Activated B cell treated with CpG ODN at 0.5 μM for 24 hours (primary cell): ENCODE measurements at regions of chr10 and their contacts with region 1.

Region 1: DNA sequence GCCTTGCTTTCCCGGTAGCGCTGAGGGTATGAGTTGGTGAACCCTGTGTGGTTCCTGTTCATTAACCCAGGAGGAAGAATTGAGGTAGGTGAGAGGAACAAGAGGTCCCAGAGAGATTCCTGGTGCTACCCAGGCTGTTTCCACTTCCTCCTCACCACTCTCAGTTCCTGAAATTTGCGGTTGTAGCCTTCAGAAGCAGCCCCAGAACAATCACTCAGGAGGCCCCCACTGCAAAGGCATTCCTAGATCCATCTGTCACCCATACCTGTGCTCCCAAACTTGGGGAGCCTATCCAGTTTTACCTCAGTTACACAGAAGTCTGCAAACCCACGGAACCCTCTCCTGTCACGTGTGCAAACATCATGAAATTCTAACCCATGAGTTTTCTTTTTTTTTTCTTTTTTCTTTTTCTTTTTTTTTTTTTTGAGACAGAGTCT is 9.0 kb upstream of the PIP4K2A start:
- DNase-seq: peak; percentile 50
- ATAC-seq: peak; percentile 91
- H3K4me3 Mint-ChIP-seq: peak overlapping the region; percentile 80
- H3K27ac Mint-ChIP-seq: peak overlapping the region; percentile 83
- H3K4me1 Mint-ChIP-seq: peaks cover 57% of the 10 kb centered on the region
- H3K27me3 Mint-ChIP-seq: no peaks in the 10 kb centered on the region
- CTCF ChIP-seq: no peak

Region 2: DNA sequence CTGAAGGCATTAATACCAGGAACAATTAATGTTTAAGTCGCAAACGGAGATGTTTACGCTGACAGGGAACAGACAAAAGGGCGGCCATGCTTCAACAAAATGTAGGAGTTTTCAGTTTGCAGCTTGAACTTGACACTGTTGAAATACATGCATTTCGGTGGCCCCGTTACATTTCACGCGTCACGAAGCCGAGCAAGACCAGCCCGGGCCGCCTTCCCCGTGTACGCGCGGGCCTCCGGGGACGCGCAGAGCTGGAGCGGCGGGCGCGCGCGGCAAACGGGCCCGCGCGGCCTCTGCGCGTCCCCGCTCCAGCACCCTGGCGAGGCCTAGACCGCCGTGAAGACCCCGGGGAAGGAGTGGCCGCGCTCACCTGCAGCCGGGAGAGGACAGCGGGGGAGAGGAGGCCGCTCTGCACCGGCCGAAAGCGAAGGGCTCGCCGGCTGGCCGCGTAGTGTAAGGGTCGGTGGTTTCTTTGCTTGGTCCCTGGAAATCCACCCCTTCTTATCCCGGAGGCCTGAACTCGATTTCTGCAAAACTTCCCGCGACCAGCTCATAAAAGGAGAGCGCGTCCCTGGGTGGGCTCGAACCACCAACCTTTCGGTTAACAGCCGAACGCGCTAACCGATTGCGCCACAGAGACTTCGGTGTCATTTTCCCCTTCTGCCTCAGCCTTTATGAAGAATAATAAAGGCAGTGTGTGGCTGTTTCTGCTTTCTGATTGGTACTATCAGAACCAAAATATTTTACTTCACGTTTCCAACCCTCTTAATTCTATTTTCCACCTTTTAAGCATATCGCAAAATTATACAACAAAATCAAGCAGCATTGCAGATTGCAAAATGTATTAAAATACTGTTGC is 494.2 kb before region 1 on chr10:
- CTCF ChIA-PET with region 1: no interaction called
- POLR2A ChIA-PET with region 1: no interaction called
- intact Hi-C with region 1: loop called (anchors 5 kb)
- DNase-seq: peak; percentile 81
- ATAC-seq: peak; percentile 79
- H3K4me3 Mint-ChIP-seq: peak overlapping the region; percentile 88
- H3K27ac Mint-ChIP-seq: peak overlapping the region; percentile 96
- H3K4me1 Mint-ChIP-seq: peaks cover 15% of the 10 kb centered on the region
- H3K27me3 Mint-ChIP-seq: peaks cover 7% of the 10 kb centered on the region
- CTCF ChIP-seq: no peak

Region 3: GRCh38 chr10:22606164-22606614 is 117.2 kb before region 1 on chr10:
- CTCF ChIA-PET with region 1: no interaction called
- POLR2A ChIA-PET with region 1: no interaction called
- intact Hi-C with region 1: loop called (anchors 1 kb)
- DNase-seq: no peak
- ATAC-seq: peak; percentile 75
- H3K4me3 Mint-ChIP-seq: peak overlapping the region; percentile 68
- H3K27ac Mint-ChIP-seq: peak overlapping the region; percentile 94
- H3K4me1 Mint-ChIP-seq: peaks cover 93% of the 10 kb centered on the region
- H3K27me3 Mint-ChIP-seq: no peaks in the 10 kb centered on the region
- CTCF ChIP-seq: no peak

Region 4: DNA sequence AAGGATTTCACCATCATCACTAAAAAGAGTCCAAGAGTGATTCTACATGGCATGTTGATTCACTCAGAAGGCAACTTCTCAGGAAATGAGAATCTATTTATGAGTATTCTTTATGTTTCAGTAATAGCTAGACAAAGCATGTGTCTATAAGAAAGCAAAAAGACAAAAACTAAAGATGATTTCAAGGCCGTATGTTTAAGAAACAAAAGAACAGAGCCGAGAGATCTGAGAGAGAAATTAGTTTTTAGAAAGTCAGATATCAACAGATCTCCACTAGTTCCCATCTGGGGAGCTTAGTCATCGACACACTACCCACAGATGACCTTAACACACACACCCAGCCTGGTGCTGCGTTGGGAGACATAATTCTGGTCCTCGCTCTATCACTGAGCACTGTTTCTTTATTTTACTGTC is 30.0 kb before region 1 on chr10:
- CTCF ChIA-PET with region 1: no interaction called
- POLR2A ChIA-PET with region 1: interaction called, 11 read pairs
- intact Hi-C with region 1: no loop called
- DNase-seq: no peak
- ATAC-seq: peak; percentile 52
- H3K4me3 Mint-ChIP-seq: no peak overlapping the region
- H3K27ac Mint-ChIP-seq: peak overlapping the region; percentile 69
- H3K4me1 Mint-ChIP-seq: peaks cover 79% of the 10 kb centered on the region
- H3K27me3 Mint-ChIP-seq: no peaks in the 10 kb centered on the region
- CTCF ChIP-seq: no peak

Region 5: DNA sequence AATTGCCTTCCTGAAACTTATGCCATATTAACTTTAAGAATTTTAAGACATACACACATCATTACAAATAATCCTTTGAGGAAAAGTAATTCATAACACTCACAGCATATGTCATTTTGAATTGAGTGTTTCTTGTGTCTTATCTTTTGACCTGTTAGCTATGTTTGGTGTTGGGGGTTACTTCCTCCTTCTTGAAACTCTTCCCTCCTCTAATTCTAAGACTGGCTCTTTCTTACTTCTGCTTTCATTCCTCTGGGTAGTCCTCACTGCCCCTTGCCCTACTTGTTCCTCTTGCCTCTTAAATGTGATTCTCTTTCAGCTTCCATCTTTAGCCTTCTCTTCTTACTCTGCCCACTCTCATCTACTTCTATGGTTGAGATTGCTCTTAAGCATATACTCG is 19.3 kb after region 1 on chr10:
- CTCF ChIA-PET with region 1: no interaction called
- POLR2A ChIA-PET with region 1: interaction called, 4 read pairs
- intact Hi-C with region 1: loop called (anchors 1 kb)
- DNase-seq: no peak
- ATAC-seq: peak; percentile 100
- H3K4me3 Mint-ChIP-seq: peak overlapping the region; percentile 8
- H3K27ac Mint-ChIP-seq: peak overlapping the region; percentile 54
- H3K4me1 Mint-ChIP-seq: peaks cover 23% of the 10 kb centered on the region
- H3K27me3 Mint-ChIP-seq: no peaks in the 10 kb centered on the region
- CTCF ChIP-seq: no peak

Region 6: GRCh38 chr10:22927661-22928403 is 204.5 kb after region 1 on chr10 and contains the start of gene ARMC3:
- CTCF ChIA-PET with region 1: no interaction called
- POLR2A ChIA-PET with region 1: no interaction called
- intact Hi-C with region 1: loop called (anchors 5 kb)
- DNase-seq: peak; percentile 54
- ATAC-seq: peak; percentile 85
- H3K4me3 Mint-ChIP-seq: no peak within 1 kb of the TSS
- H3K27ac Mint-ChIP-seq: peak within 1 kb of the TSS; percentile 13
- H3K4me1 Mint-ChIP-seq: peaks cover 17% of the 10 kb centered on the region
- H3K27me3 Mint-ChIP-seq: peaks cover 6% of the 10 kb centered on the region
- CTCF ChIP-seq: no peak
- total RNA-seq, gene ARMC3: not detected in 2 replicates